ENCODE measurements at regions of chr19 and their contacts with region 1.

Region 1: GRCh38 chr19:48445606-48446481 is at the start of gene GRWD1:
- DNase-seq: peak; percentile 63 to 98 (median 93)
- ATAC-seq: peak; percentile 95
- H3K4me3 ChIP-seq: peak within 1 kb of the TSS; percentile 80
- H3K4me3 Mint-ChIP-seq: peak within 1 kb of the TSS; percentile 87 to 96 (median 93)
- H3K27ac ChIP-seq: peak within 1 kb of the TSS; percentile 83
- H3K27ac Mint-ChIP-seq: peak within 1 kb of the TSS; percentile 90 to 98 (median 95)
- H3K4me1 ChIP-seq: peaks cover 20 to 22% of the 10 kb centered on the region in 2 donors
- H3K4me1 Mint-ChIP-seq: peaks cover 19 to 44% (median 37%) of the 10 kb centered on the region in 7 donors
- H3K27me3 ChIP-seq: peaks cover 0 to 8% of the 10 kb centered on the region in 2 donors
- H3K27me3 Mint-ChIP-seq: peaks cover 12 to 33% (median 21%) of the 10 kb centered on the region in 5 donors
- total RNA-seq, gene GRWD1: 26.1 to 45.8 (median 36.3) TPM

Region 2: DNA sequence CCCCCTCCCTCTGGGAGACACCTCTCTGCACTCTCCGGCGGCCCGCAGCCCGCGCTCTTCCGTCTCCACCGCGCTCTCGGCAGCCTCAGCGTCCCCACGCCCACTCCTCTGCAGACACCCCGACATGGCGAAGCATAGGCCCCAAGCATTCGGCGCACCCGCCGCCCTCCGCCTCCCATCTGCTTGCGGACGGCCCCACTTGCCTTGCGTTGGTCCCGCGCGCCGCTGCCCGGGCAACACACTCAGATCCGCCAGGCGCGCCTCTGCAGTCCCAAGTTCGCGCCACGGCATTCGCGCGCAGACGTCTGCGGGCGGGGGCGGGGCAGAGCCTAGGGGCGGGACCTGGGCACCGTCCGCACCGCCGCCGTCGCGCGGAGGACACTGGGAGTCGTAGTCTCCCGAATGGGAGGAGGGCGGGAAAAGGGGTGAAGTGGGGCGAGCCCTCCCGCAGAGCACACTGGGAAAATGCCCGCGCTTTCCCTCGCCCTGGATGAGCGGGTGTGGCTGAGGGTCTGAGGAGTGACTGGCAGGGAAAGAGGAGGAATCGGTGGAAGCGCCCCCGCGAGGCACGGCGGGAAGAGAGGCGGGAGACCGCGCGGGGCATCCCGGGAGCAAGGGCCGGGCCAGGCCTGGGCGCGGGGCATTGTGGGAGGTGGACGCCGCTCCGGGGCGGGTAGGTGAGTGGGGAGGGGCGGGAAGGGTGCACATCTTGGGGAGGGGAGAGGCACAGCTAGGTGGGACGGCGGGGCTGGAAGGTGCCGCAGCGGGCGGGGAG is 275.6 kb before region 1 on chr19 and contains the starts of genes LIG1 and ZSWIM9:
- CTCF ChIA-PET with region 1: no interaction called
- POLR2A ChIA-PET with region 1: no interaction called
- intact Hi-C with region 1: loop called in 1 of 2 experiments (anchors 1 kb)
- DNase-seq: peak; percentile 87 to 96 (median 94)
- ATAC-seq: peak; percentile 89
- H3K4me3 ChIP-seq: peak within 1 kb of the TSS; percentile 98
- H3K4me3 Mint-ChIP-seq: peak within 1 kb of the TSS; percentile 90 to 100 (median 97)
- H3K27ac ChIP-seq: peak within 1 kb of the TSS; percentile 94
- H3K27ac Mint-ChIP-seq: peak within 1 kb of the TSS; percentile 92 to 100 (median 97)
- H3K4me1 ChIP-seq: peaks cover 14 to 16% of the 10 kb centered on the region in 2 donors
- H3K4me1 Mint-ChIP-seq: peaks cover 20 to 44% (median 32%) of the 10 kb centered on the region in 7 donors
- H3K27me3 ChIP-seq: no peaks in the 10 kb centered on the region
- H3K27me3 Mint-ChIP-seq: no peaks in the 10 kb centered on the region
- total RNA-seq, gene LIG1: 61.0 to 134 (median 122) TPM
- total RNA-seq, gene ZSWIM9: 5.0 to 11.6 (median 7.4) TPM

Region 3: GRCh38 chr19:48398375-48399235 is 47.2 kb before region 1 on chr19:
- CTCF ChIA-PET with region 1: no interaction called
- POLR2A ChIA-PET with region 1: interaction called, 4 read pairs
- intact Hi-C with region 1: loop called in 1 of 2 experiments (anchors 2 kb)
- DNase-seq: peak; percentile 77 to 88 (median 86)
- ATAC-seq: peak; percentile 90
- H3K4me3 ChIP-seq: peak overlapping the region; percentile 63
- H3K4me3 Mint-ChIP-seq: peak overlapping the region; percentile 54 to 96 (median 79)
- H3K27ac ChIP-seq: peak overlapping the region; percentile 59
- H3K27ac Mint-ChIP-seq: peak overlapping the region; percentile 22 to 97 (median 85)
- H3K4me1 ChIP-seq: peaks cover 17 to 29% of the 10 kb centered on the region in 2 donors
- H3K4me1 Mint-ChIP-seq: peaks cover 18 to 51% (median 41%) of the 10 kb centered on the region in 7 donors
- H3K27me3 ChIP-seq: peaks cover 9 to 21% of the 10 kb centered on the region in 2 donors
- H3K27me3 Mint-ChIP-seq: peaks cover 15 to 43% (median 31%) of the 10 kb centered on the region in 5 donors

Region 4: DNA sequence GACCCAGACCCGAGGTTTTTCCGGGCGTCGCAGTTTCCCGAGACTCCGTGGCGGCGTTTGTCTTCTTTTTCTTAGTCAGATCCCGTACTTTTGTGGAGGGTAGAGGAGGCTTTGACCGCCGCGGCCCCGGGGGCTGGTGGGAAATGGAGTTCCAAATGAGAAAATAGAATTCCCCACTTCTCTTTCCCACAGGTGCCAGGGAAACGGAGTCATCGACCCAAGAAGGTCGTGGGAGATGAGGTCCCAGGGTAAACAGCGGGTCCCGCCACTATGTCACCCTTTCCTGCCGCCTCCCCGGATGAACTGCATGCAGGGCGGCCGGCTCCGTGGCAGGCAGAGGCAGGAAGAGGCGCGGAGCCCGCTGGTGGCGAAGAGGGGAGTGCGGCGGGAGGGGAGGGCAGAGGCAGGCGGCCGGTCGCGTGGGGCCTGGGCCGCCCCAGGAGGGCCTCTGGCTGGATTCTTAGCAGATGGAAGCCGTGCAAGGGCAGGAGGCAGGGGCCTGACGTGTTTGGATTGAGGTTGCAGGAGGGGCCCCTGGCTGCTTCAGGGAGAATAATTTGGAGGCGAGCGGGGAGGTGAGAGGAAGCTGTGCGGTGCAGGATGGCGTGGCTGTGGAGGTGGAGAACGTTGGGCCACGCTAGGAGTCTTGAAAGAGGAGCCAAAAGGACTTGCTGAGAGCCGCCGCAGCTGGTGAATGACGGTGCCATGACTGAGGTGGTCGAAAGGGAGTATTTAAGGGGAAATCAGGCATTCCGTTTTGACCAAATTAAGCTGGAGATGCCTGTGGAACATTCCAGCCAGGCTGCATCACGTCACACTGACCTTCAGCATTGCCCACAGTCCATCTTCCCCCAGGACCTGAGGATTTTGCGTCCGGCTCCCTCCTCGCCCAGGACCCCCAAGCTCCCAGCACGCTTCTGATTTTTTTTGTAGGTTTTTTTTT is 35.0 kb after region 1 on chr19:
- CTCF ChIA-PET with region 1: interaction called, 3 read pairs
- POLR2A ChIA-PET with region 1: interaction called, 3 read pairs
- intact Hi-C with region 1: loop called in 1 of 2 experiments (anchors 5 kb)
- DNase-seq: peak; percentile 50 to 69 (median 58)
- ATAC-seq: peak; percentile 82
- H3K4me3 ChIP-seq: peak overlapping the region; percentile 68
- H3K4me3 Mint-ChIP-seq: peak overlapping the region; percentile 81 to 90 (median 86)
- H3K27ac ChIP-seq: peak overlapping the region; percentile 79
- H3K27ac Mint-ChIP-seq: peak overlapping the region in 8 of 9 donors; percentile 79 to 93 (median 88)
- H3K4me1 ChIP-seq: peaks cover 3 to 9% of the 10 kb centered on the region in 2 donors
- H3K4me1 Mint-ChIP-seq: peaks cover 6 to 29% (median 22%) of the 10 kb centered on the region in 7 donors
- H3K27me3 ChIP-seq: no peaks in the 10 kb centered on the region
- H3K27me3 Mint-ChIP-seq: no peaks in the 10 kb centered on the region

Region 5: GRCh38 chr19:48713864-48714758 is 268.3 kb after region 1 on chr19:
- CTCF ChIA-PET with region 1: no interaction called
- POLR2A ChIA-PET with region 1: no interaction called
- intact Hi-C with region 1: loop called in 1 of 2 experiments (anchors 1 kb)
- DNase-seq: peak; percentile 92 to 97 (median 97)
- ATAC-seq: peak; percentile 96
- H3K4me3 ChIP-seq: peak overlapping the region; percentile 95
- H3K4me3 Mint-ChIP-seq: peak overlapping the region; percentile 82 to 92 (median 88)
- H3K27ac ChIP-seq: peak overlapping the region; percentile 79
- H3K27ac Mint-ChIP-seq: peak overlapping the region; percentile 16 to 90 (median 81)
- H3K4me1 ChIP-seq: peaks cover 11 to 12% of the 10 kb centered on the region in 2 donors
- H3K4me1 Mint-ChIP-seq: peaks cover 9 to 24% (median 20%) of the 10 kb centered on the region in 7 donors
- H3K27me3 ChIP-seq: no peaks in the 10 kb centered on the region
- H3K27me3 Mint-ChIP-seq: no peaks in the 10 kb centered on the region